K562 (cell line): ENCODE measurements at regions of chr22 and their contacts with region 1.

Region 1: GRCh38 chr22:17920145-17920605 is 104.2 kb downstream of the MICAL3 start:
- DNase-seq: peak; percentile 71 to 94 (median 82)
- ATAC-seq: peak; percentile 92
- H3K4me3 ChIP-seq: peak overlapping the region; percentile 2; the same call in 1 of the 2 replicates
- H3K27ac ChIP-seq: peak overlapping the region; percentile 27; the same call in 1 of the 3 replicates
- H3K4me1 ChIP-seq: peaks cover 58 to 67% of the 10 kb centered on the region in 2 experiments
- H3K27me3 ChIP-seq: no peaks in the 10 kb centered on the region
- CTCF ChIP-seq: peak in 1 of 3 experiments; percentile 33; a peak in 2 of 6 replicates
- EP300 ChIP-seq: peak; percentile 49; the same call in 1 of the 2 replicates
- POLR2A ChIP-seq: no peak
- RAD21 ChIP-seq: peak in 1 of 2 experiments; percentile 44; a peak in 2 of 4 replicates

Region 2: DNA sequence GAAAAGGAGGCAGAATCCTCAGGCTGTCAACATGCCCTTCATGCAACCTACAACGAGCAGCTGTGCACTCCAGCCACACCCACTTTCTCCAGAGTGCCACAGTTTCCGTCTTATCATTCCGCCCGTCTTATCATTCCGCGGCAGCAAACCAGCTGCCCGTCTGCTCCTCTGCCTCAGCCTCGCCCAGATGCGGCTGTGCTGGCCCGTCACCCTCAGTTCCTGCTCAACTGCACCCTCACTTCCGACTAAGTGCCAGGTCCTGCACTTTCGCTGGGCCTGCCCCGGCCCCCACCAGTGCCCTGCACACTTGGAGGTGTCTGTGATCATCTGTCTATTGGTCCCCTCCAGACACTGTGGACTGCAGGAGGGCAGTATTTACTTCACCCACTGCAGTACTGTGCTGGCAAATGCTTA is 60.5 kb after region 1 on chr22:
- CTCF ChIA-PET with region 1: no interaction called
- POLR2A ChIA-PET with region 1: no interaction called
- in situ Hi-C with region 1: no loop called
- intact Hi-C with region 1: loop called (anchors 2 kb)
- DNase-seq: peak; percentile 90 to 96 (median 92)
- ATAC-seq: peak; percentile 92
- H3K4me3 ChIP-seq: no peak overlapping the region; the same call in 1 of the 2 replicates
- H3K27ac ChIP-seq: peak overlapping the region; percentile 44; the same call in 2 of the 3 replicates
- H3K4me1 ChIP-seq: peaks cover 35 to 37% of the 10 kb centered on the region in 2 experiments
- H3K27me3 ChIP-seq: no peaks in the 10 kb centered on the region
- CTCF ChIP-seq: no peak
- EP300 ChIP-seq: peak; percentile 96
- POLR2A ChIP-seq: no peak
- RAD21 ChIP-seq: no peak; a peak in 1 of 4 replicates

Region 3: GRCh38 chr22:18001040-18001893 is 81.1 kb after region 1 on chr22:
- CTCF ChIA-PET with region 1: no interaction called
- POLR2A ChIA-PET with region 1: interaction called, 3 read pairs
- in situ Hi-C with region 1: no loop called
- intact Hi-C with region 1: loop called (anchors 2 kb)
- DNase-seq: peak; percentile 98 to 100 (median 100)
- ATAC-seq: peak; percentile 95
- H3K4me3 ChIP-seq: peak overlapping the region; percentile 95
- H3K27ac ChIP-seq: peak overlapping the region; percentile 100
- H3K4me1 ChIP-seq: peaks cover 12 to 24% of the 10 kb centered on the region in 2 experiments; a peak in 4 of 5 replicates
- H3K27me3 ChIP-seq: no peaks in the 10 kb centered on the region
- CTCF ChIP-seq: peak; percentile 55 to 74 (median 62)
- EP300 ChIP-seq: peak; percentile 4; the same call in 1 of the 2 replicates
- POLR2A ChIP-seq: peak; percentile 88
- RAD21 ChIP-seq: peak; percentile 58 to 61